Activated naive CD4-positive, alpha-beta T cell treated with anti-CD3 and anti-CD28 coated beads, Interleukin-2, amount 10 ng/mL, durations not matched to agents 7 days and 5 days (primary cell): ENCODE measurements at regions of chr2 and their contacts with region 1.

Region 1: GRCh38 chr2:73212448-73213176 is 1.4 kb upstream of the SMYD5 start:
- DNase-seq: peak; percentile 79
- H3K4me3 Mint-ChIP-seq: no peak overlapping the region
- H3K27ac Mint-ChIP-seq: no peak overlapping the region
- H3K4me1 Mint-ChIP-seq: peaks cover 32% of the 10 kb centered on the region
- H3K27me3 Mint-ChIP-seq: peaks cover 20% of the 10 kb centered on the region

Region 2: GRCh38 chr2:73233154-73233931 is 20.7 kb after region 1 on chr2 and contains the start of gene PRADC1:
- CTCF ChIA-PET with region 1: interaction called, 18 read pairs
- DNase-seq: peak; percentile 98
- H3K4me3 Mint-ChIP-seq: peak within 1 kb of the TSS; percentile 92
- H3K27ac Mint-ChIP-seq: peak within 1 kb of the TSS; percentile 93
- H3K4me1 Mint-ChIP-seq: peaks cover 42% of the 10 kb centered on the region
- H3K27me3 Mint-ChIP-seq: no peaks in the 10 kb centered on the region

Region 3: GRCh38 chr2:73594251-73594650 is 381.6 kb after region 1 on chr2:
- CTCF ChIA-PET with region 1: no interaction called
- DNase-seq: no peak
- H3K4me3 Mint-ChIP-seq: no peak overlapping the region
- H3K27ac Mint-ChIP-seq: no peak overlapping the region
- H3K4me1 Mint-ChIP-seq: no peaks in the 10 kb centered on the region
- H3K27me3 Mint-ChIP-seq: no peaks in the 10 kb centered on the region

Region 4: GRCh38 chr2:74080346-74080745 is 867.7 kb after region 1 on chr2:
- CTCF ChIA-PET with region 1: no interaction called
- DNase-seq: no peak
- H3K4me3 Mint-ChIP-seq: no peak overlapping the region
- H3K27ac Mint-ChIP-seq: no peak overlapping the region
- H3K4me1 Mint-ChIP-seq: no peaks in the 10 kb centered on the region
- H3K27me3 Mint-ChIP-seq: no peaks in the 10 kb centered on the region